ENCODE measurements at regions of chr12 and their contacts with region 1.

Region 1: GRCh38 chr12:102958073-102958829 is 777 bp downstream of the ASCL1 start:
- DNase-seq: no peak
- H3K4me3 ChIP-seq: peak overlapping the region; percentile 24
- H3K4me3 Mint-ChIP-seq: peak overlapping the region; percentile 70
- H3K27ac Mint-ChIP-seq: no peak overlapping the region
- H3K4me1 ChIP-seq: no peaks in the 10 kb centered on the region
- H3K4me1 Mint-ChIP-seq: no peaks in the 10 kb centered on the region
- H3K27me3 ChIP-seq: peaks cover 6% of the 10 kb centered on the region
- H3K27me3 Mint-ChIP-seq: peaks cover 44% of the 10 kb centered on the region
- CTCF ChIP-seq: no peak

Region 2: GRCh38 chr12:102971227-102971626 is 13.0 kb after region 1 on chr12:
- CTCF ChIA-PET with region 1: no interaction called
- POLR2A ChIA-PET with region 1: no interaction called
- intact Hi-C with region 1: no loop called
- DNase-seq: no peak
- H3K4me3 ChIP-seq: no peak overlapping the region
- H3K4me3 Mint-ChIP-seq: no peak overlapping the region
- H3K27ac Mint-ChIP-seq: no peak overlapping the region
- H3K4me1 ChIP-seq: no peaks in the 10 kb centered on the region
- H3K4me1 Mint-ChIP-seq: no peaks in the 10 kb centered on the region
- H3K27me3 ChIP-seq: no peaks in the 10 kb centered on the region
- H3K27me3 Mint-ChIP-seq: peaks cover 13% of the 10 kb centered on the region
- CTCF ChIP-seq: no peak

Region 3: DNA sequence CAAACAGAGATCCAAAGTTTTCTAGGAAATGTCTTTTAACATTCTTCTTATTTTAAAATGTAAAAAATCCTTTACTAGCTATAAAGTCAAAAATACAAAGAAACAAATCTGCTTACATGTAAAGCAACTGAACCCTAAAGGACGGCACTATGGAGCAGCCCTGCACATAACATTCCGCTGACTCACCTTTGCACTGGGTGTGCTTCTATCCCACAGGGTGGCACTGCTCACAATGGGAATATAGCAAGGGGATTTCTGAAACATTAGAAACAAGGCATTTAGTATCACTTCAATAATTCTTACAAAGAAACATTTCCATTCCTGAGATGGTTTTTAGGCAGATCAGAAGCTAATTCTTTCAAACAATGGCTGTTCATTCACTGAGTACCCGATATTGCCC is 443.2 kb after region 1 on chr12:
- CTCF ChIA-PET with region 1: no interaction called
- POLR2A ChIA-PET with region 1: no interaction called
- intact Hi-C with region 1: loop called (anchors 10 kb)
- DNase-seq: peak; percentile 14 to 47
- H3K4me3 ChIP-seq: no peak overlapping the region
- H3K4me3 Mint-ChIP-seq: no peak overlapping the region
- H3K27ac Mint-ChIP-seq: no peak overlapping the region
- H3K4me1 ChIP-seq: no peaks in the 10 kb centered on the region
- H3K4me1 Mint-ChIP-seq: no peaks in the 10 kb centered on the region
- H3K27me3 ChIP-seq: no peaks in the 10 kb centered on the region
- H3K27me3 Mint-ChIP-seq: peaks cover 2% of the 10 kb centered on the region
- CTCF ChIP-seq: peak in 1 of 2 experiments; percentile 47